Activated T-helper 1 cell treated with anti-CD3 and anti-CD28 coated beads, Interleukin-12 subunit alpha, Interleukin-12 subunit beta, Interleukin-2, Interleukin-4 antibody, amounts not matched to agents 30 ng/mL and 10 ng/mL and 1 ng/mL, durations not matched to agents 14 hours and 24 hours and 36 hours (primary cell): ENCODE measurements at regions of chr1 and their contacts with region 1.

Region 1: GRCh38 chr1:39204441-39205081 is at the start of gene MACF1:
- DNase-seq: peak; percentile 34
- H3K4me3 Mint-ChIP-seq: peak within 1 kb of the TSS; percentile 94
- H3K27ac Mint-ChIP-seq: peak within 1 kb of the TSS; percentile 98
- H3K4me1 Mint-ChIP-seq: peaks cover 50% of the 10 kb centered on the region
- H3K27me3 Mint-ChIP-seq: no peaks in the 10 kb centered on the region
- total RNA-seq, gene MACF1: 224 and 226 TPM in 2 replicates

Region 2: GRCh38 chr1:39132505-39133339 is 71.8 kb before region 1 on chr1:
- intact Hi-C with region 1: no loop called
- DNase-seq: no peak
- H3K4me3 Mint-ChIP-seq: no peak overlapping the region
- H3K27ac Mint-ChIP-seq: no peak overlapping the region
- H3K4me1 Mint-ChIP-seq: peaks cover 6% of the 10 kb centered on the region
- H3K27me3 Mint-ChIP-seq: no peaks in the 10 kb centered on the region

Region 3: DNA sequence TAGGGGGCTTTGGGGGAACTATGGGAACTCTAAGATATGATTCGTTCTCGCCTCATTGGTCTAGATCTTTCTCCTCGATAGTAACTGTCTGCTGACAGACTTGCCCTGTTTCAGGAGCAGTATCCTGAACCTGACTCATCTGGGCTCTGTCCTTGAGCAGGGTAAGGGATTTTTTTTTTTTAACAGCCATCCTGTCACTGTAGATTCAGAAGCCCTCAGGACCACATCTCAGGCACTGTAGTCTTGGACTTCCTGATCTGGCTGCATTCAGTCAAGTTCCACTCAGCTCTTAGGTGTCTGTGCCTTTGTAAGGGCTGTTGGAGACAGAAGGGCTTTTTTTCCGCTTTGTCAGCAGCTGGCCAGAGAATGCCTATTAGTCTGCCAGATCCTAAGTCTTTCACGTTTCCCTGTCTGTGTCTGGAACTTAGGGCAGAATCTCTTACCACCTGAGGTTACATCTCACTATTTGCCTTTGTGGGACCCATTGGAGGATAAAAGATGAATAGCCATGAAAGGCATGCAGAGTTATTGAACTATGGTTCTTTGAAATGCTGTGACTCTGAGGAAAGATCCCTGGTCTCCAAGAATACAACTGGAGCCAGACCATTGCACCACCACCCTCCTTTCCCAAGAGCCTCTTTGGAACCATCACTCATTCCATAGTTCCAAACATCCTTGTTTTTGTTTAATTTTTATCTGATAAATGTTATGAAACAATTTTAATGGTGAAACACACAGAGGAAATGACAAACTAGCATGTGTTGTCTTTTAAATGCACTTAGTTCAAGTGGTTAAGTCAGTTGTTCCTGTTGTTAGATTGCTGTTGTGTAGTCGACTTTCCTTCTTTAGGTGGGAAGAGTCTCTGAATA is 49.8 kb before region 1 on chr1:
- intact Hi-C with region 1: no loop called
- DNase-seq: no peak
- H3K4me3 Mint-ChIP-seq: no peak overlapping the region
- H3K27ac Mint-ChIP-seq: no peak overlapping the region
- H3K4me1 Mint-ChIP-seq: peaks cover 24% of the 10 kb centered on the region
- H3K27me3 Mint-ChIP-seq: peaks cover 16% of the 10 kb centered on the region

Region 4: GRCh38 chr1:39214998-39215873 is 10.7 kb after region 1 on chr1:
- intact Hi-C with region 1: loop called (anchors 1 kb)
- DNase-seq: peak; percentile 30
- H3K4me3 Mint-ChIP-seq: peak overlapping the region; percentile 86
- H3K27ac Mint-ChIP-seq: peak overlapping the region; percentile 91
- H3K4me1 Mint-ChIP-seq: peaks cover 58% of the 10 kb centered on the region
- H3K27me3 Mint-ChIP-seq: no peaks in the 10 kb centered on the region

Region 5: DNA sequence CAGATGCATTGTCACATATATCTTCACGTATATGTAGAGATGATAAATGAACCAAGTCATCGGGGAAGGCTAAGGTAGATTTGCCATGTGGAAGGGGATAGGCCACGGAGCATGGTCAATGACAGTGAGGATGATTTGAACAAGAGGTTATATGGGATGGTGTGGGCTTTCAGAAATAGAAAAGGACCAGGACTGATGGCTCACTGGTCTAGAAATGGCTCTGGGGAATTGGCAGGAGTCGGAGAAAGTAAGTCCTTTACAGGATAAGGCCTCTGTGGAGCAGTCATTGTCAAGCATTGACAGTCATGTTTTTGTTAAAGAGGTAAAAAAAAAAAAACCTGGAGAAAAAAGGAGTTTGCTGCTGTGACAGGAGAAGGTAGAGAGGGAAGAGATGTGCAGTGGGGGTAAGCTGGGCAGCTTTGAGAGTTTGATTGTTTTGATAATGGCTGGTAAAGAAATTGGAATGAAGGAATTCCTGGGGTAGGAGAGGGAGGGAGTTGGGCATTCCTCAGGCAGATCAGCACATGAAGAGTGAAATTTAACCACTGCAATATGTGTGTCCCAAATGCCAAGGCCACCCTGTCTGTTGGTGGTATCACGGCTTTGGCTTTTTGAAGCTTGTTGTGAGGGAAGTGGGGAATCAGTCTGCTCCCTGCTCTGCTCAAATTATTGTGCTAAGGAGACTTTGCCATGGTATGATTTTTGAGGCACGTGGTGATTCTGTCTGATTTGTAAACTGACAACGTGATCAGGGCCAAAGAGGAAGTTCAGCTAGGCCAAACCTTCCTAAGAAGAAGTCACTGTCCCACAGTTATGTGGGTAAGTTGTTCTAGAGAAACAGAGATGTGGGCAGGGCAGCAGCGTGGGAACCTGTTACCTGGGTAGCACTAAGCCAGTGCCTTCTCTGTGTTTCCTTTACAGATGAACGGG is 26.0 kb after region 1 on chr1:
- intact Hi-C with region 1: loop called (anchors 1 kb)
- DNase-seq: no peak
- H3K4me3 Mint-ChIP-seq: peak overlapping the region; percentile 17
- H3K27ac Mint-ChIP-seq: peak overlapping the region; percentile 45
- H3K4me1 Mint-ChIP-seq: peaks cover 44% of the 10 kb centered on the region
- H3K27me3 Mint-ChIP-seq: no peaks in the 10 kb centered on the region

Region 6: GRCh38 chr1:40081871-40082270 is 877.3 kb after region 1 on chr1:
- intact Hi-C with region 1: no loop called
- DNase-seq: no peak
- H3K4me3 Mint-ChIP-seq: no peak overlapping the region
- H3K27ac Mint-ChIP-seq: no peak overlapping the region
- H3K4me1 Mint-ChIP-seq: peaks cover 17% of the 10 kb centered on the region
- H3K27me3 Mint-ChIP-seq: no peaks in the 10 kb centered on the region

Region 7: DNA sequence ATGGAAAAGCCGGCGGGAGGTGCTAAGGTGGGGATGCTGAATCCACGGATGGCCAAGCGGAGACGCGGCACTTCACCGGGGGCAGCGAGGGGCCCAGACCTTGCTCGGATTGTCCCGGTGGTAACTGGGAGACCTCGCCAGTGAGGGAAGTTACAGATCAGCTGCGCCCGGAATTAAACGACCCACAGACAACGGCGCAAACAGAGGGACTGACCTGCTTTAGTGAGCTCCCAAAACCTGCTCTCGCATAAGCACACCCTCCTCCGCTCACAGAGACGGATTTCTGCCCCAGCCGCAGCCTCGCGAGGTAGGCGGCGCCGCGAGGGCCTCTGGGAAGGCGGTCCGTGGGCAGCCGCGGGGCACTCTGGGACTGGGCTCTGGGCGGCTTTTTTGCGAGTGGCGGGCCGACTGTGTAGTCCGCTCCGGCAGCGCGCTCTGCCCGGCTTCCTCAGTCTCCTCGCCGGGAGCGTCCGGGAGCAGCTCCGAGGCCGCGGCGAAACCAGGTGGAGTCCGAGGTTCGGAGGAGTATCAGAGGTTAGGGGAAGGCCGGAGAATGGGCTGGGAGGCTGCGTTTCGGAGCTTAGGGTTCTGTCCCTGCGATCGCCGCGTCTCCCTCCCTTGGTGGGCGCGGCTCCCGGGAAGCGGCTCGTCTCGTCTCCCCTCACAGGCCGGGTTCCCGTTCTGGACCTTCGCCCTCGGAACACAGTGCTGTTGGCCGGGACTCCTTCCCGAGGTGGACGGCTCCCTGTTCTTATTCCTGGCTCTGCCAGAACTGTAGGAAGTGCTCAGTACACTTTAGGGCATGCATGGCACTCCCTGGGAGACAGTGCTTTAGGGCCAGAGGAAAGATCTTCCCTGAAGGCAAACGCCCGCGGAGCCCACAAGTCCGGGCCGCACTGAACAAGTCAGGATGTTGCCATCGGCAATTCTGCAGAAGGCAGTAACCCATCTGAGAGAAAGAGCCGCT is 1304.1 kb after region 1 on chr1 and contains the start of gene EXO5:
- intact Hi-C with region 1: no loop called
- DNase-seq: peak; percentile 84
- H3K4me3 Mint-ChIP-seq: peak within 1 kb of the TSS; percentile 82
- H3K27ac Mint-ChIP-seq: peak within 1 kb of the TSS; percentile 76
- H3K4me1 Mint-ChIP-seq: peaks cover 13% of the 10 kb centered on the region
- H3K27me3 Mint-ChIP-seq: no peaks in the 10 kb centered on the region
- total RNA-seq, gene EXO5: 18.2 and 18.3 TPM in 2 replicates